Activated CD4-positive, alpha-beta T cell treated with anti-CD3 and anti-CD28 coated beads, Interleukin-2, amount 10 ng/mL, durations not matched to agents 24 days and 14 days (primary cell): ENCODE measurements at regions of chr11 and their contacts with region 1.

Region 1: DNA sequence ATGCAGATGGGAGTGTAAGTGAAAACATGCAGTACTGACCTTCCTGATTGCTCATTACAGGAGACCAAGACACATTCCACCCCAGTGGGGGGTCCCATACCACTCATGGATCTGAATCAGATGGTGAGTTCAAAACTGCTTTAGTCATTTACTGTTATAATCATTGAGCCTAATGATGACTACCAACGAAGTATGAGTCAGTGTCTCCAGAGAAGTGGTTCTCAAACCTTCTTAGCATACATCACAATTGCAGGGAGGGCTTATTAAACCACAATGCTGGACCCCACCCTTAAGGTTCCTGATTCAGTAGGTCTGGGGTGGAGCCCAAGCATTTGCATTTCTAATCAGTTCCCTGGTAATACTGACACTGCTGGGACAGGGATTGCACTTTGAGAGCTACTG is 75.8 kb downstream of the CD44 start:
- DNase-seq: no peak
- H3K4me3 Mint-ChIP-seq: no peak overlapping the region
- H3K27ac Mint-ChIP-seq: peak overlapping the region; percentile 41
- H3K4me1 Mint-ChIP-seq: peaks cover 36% of the 10 kb centered on the region
- H3K27me3 Mint-ChIP-seq: no peaks in the 10 kb centered on the region

Region 2: DNA sequence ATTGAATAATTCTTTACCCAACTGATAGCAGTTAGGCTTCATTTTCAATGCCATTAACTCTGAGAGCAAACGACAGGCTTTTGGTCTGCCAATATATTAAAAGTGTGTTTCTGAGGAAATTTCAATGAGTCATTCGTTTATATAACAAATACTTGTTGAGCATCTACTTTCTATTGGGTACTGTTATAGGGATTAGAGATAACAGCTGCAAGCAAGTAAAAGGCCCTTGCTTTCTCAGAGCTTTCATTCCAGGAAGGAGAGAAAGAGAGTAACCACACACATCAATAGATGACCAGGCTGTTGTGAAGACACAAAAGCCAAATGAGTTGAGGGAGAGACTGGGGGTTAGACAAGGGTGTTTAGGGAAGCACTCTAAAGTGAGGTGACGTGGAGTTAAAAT is 40.1 kb before region 1 on chr11:
- intact Hi-C with region 1: loop called (anchors 5 kb)
- DNase-seq: peak; percentile 69
- H3K4me3 Mint-ChIP-seq: peak overlapping the region; percentile 57
- H3K27ac Mint-ChIP-seq: peak overlapping the region; percentile 85
- H3K4me1 Mint-ChIP-seq: peaks cover 85% of the 10 kb centered on the region
- H3K27me3 Mint-ChIP-seq: no peaks in the 10 kb centered on the region